ENCODE measurements at regions of chr3 and their contacts with region 1.

Region 1: GRCh38 chr3:186617038-186617946 is 4.4 kb downstream of the AHSG start:
- DNase-seq: peak; percentile 89
- ATAC-seq: peak; percentile 98
- H3K4me3 Mint-ChIP-seq: peak overlapping the region; percentile 26
- H3K27ac Mint-ChIP-seq: no peak overlapping the region
- H3K4me1 Mint-ChIP-seq: peaks cover 21% of the 10 kb centered on the region
- H3K27me3 Mint-ChIP-seq: peaks cover 50% of the 10 kb centered on the region

Region 2: GRCh38 chr3:186452517-186452916 is 164.8 kb before region 1 on chr3:
- CTCF ChIA-PET with region 1: no interaction called
- DNase-seq: no peak
- ATAC-seq: no peak
- H3K4me3 Mint-ChIP-seq: no peak overlapping the region
- H3K27ac Mint-ChIP-seq: no peak overlapping the region
- H3K4me1 Mint-ChIP-seq: no peaks in the 10 kb centered on the region
- H3K27me3 Mint-ChIP-seq: peaks cover 11% of the 10 kb centered on the region

Region 3: GRCh38 chr3:186534113-186534669 is 83.1 kb before region 1 on chr3:
- CTCF ChIA-PET with region 1: interaction called, 26 read pairs
- DNase-seq: peak; percentile 52
- ATAC-seq: peak; percentile 84
- H3K4me3 Mint-ChIP-seq: no peak overlapping the region
- H3K27ac Mint-ChIP-seq: no peak overlapping the region
- H3K4me1 Mint-ChIP-seq: peaks cover 27% of the 10 kb centered on the region
- H3K27me3 Mint-ChIP-seq: no peaks in the 10 kb centered on the region

Region 4: DNA sequence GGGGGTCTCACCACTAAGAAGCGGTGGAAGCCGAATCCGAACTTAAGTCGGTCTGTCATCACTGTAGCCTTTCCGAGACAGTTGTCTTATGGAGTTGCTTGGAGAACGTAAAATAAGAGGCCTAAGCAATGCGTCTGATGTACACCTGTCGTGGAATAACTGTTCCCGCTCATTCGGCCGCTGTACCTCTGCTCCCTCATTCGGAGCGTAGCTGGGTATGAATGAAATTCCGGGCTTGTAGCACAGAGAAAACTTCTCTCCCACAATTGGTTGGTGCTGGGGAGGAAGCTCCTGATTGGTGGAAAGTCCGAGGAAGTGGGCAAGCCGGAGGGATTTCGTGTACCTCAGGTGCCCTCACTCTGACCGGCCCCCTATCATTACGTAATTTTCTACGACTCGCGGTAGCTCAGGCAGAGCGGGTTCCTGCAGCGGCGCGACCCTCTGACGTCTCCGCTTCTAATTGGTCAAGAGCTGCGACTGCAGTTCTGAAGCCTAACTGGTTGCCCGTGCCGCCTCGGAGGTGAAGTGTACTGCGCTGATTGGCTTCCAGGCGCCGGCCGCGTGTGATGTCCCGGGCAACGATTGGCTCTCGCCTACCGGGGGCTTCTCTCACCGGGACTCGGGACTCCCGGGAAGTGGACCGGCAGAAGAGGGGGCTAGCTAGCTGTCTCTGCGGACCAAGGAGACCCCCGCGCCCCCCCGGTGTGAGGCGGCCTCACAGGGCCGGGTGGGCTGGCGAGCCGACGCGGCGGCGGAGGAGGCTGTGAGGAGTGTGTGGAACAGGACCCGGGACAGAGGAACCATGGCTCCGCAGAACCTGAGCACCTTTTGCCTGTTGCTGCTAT is 47.0 kb before region 1 on chr3 and contains the start of gene DNAJB11:
- CTCF ChIA-PET with region 1: interaction called, 64 read pairs
- DNase-seq: peak; percentile 100
- ATAC-seq: peak; percentile 87
- H3K4me3 Mint-ChIP-seq: peak within 1 kb of the TSS; percentile 87
- H3K27ac Mint-ChIP-seq: peak within 1 kb of the TSS; percentile 88
- H3K4me1 Mint-ChIP-seq: peaks cover 55% of the 10 kb centered on the region
- H3K27me3 Mint-ChIP-seq: no peaks in the 10 kb centered on the region
- total RNA-seq, gene DNAJB11: 48.6 to 61.3 TPM

Region 5: GRCh38 chr3:186633481-186633880 is 16.2 kb after region 1 on chr3:
- CTCF ChIA-PET with region 1: interaction called, 15 read pairs
- DNase-seq: no peak
- ATAC-seq: no peak
- H3K4me3 Mint-ChIP-seq: no peak overlapping the region
- H3K27ac Mint-ChIP-seq: no peak overlapping the region
- H3K4me1 Mint-ChIP-seq: no peaks in the 10 kb centered on the region
- H3K27me3 Mint-ChIP-seq: peaks cover 17% of the 10 kb centered on the region

Region 6: GRCh38 chr3:186806089-186807055 is 189.1 kb after region 1 on chr3 and contains the start of gene RFC4:
- CTCF ChIA-PET with region 1: interaction called, 10 read pairs
- DNase-seq: peak; percentile 89
- ATAC-seq: peak; percentile 84
- H3K4me3 Mint-ChIP-seq: peak within 1 kb of the TSS; percentile 92
- H3K27ac Mint-ChIP-seq: peak within 1 kb of the TSS; percentile 95
- H3K4me1 Mint-ChIP-seq: peaks cover 39% of the 10 kb centered on the region
- H3K27me3 Mint-ChIP-seq: no peaks in the 10 kb centered on the region
- total RNA-seq, gene RFC4: 111 to 114 TPM

Region 7: DNA sequence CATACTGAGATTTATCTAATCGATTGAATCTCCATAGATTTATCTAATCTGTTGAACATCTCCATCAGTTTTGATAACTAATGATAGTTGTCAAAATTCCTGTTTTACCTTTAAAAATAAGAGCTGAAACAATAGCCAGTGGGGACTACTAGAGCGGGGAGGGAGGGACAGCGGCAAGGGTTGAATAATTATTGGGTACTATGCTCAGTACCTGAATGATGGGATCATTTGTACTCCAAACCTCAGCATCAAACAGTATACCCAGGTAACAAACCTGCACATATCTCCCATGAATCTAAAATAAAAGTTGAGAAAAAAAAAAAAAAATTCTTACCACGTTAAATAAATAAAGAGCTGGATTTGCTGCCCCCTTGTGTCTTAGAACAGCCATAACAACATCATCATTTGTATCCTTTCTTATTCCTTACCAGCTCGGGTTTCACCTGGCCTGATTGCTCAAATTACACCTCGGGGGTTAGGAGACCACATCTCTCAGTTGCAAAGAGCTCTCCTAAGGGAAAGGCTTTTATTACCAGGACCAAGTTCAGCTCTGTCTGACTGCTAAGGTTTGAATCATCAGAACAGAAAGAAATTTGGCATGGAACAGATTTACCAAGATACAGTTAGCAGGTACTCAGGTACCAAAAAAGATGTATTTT is 547.7 kb after region 1 on chr3:
- CTCF ChIA-PET with region 1: interaction called, 11 read pairs
- DNase-seq: peak; percentile 46
- ATAC-seq: peak; percentile 70
- H3K4me3 Mint-ChIP-seq: no peak overlapping the region
- H3K27ac Mint-ChIP-seq: no peak overlapping the region
- H3K4me1 Mint-ChIP-seq: peaks cover 3% of the 10 kb centered on the region
- H3K27me3 Mint-ChIP-seq: peaks cover 40% of the 10 kb centered on the region

Region 8: DNA sequence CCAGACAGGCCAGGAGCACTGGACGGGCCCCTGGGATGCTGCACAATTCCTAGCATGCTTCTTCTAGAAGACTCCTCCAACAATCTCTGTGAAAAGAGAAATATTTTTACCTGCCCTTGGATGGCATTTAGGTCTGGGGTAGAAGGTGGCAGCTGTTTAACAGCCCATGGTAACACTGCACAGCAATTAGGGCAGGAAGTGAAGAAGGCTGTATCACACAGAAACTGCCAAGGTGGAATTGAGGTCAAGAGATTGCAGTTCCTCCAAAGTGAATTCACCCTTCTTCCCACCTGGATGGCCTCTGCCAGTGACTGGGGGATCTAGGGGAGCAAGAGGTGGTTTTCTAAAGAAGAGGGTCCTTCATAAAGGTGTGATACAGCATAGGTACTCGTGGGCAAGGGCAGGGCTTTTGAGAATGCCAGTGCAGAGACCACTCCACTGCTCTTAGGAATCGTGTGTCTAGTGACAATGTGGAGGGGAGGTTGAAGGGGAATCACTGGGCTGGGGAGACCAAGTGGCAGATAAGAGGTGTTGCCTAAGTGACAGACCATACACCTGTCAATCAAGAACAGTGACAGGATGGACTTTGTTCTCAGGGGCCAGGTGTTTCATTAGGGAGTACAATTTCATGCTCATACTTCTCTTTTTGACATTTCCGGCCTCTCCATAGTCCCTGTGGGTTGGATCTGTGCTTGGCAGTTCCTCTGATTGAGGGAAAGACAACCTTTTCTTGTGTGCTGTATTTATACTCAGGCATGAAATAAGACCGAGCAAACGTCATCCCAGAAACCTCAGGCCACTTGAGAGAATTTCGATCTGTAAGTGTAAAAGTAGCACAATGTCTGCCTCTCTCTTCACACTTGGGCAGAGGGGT is 1211.5 kb after region 1 on chr3:
- CTCF ChIA-PET with region 1: no interaction called
- DNase-seq: no peak
- ATAC-seq: no peak
- H3K4me3 Mint-ChIP-seq: no peak overlapping the region
- H3K27ac Mint-ChIP-seq: no peak overlapping the region
- H3K4me1 Mint-ChIP-seq: peaks cover 27% of the 10 kb centered on the region
- H3K27me3 Mint-ChIP-seq: no peaks in the 10 kb centered on the region

Measured in activated CD8-positive, alpha-beta memory T cell treated with anti-CD3 and anti-CD28 coated beads, Interleukin-2, amount 10 ng/mL, durations not matched to agents 7 days and 5 days (primary cell).